ENCODE measurements at regions of chr2 and their contacts with region 1.

Region 1: DNA sequence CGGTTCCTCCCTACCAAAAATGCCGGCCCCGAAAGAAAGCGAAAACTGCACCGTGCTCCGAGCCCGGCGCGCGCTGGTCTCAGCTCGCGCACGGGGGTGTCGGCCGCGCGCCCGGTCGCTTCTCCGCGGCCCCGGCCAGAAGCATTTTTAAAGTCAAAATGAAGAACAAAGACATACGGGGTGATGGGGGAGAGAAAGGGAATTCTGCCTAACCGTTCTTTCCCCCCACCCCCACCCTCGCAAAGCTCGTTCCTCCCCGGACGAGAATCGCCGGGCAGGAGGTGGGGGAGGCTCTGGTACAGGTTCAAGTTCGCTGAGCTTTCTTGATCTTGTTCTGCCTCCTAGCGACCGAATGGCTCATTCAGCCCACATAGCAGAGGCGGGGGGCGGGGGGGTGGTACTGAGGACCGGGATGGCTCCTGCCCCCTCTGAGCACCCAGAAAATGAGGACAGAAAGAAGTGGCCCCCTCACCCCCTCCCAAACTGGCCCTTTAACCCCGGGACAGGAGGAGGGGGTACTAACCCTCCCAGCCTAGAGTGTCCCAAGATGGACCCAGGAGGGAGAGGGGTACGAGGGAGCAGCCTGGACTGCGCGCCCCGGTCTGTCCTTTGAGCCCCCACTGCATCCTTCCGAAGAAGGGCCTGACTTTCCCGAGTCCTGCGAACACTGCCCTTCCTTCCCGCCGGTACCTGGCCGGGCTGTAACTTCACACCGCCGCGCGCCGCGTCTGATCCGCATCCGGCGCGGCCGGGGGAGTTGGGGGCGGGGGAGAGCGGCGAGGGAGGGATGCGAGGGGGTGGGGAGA is 3.1 kb downstream of the BCL11A start:
- DNase-seq: peak; percentile 83 to 92 (median 87)
- ATAC-seq: peak; percentile 74
- H3K4me3 ChIP-seq: peak overlapping the region; percentile 52
- H3K4me1 ChIP-seq: peaks cover 21% of the 10 kb centered on the region
- CTCF ChIP-seq: peak; percentile 11

Region 2: GRCh38 chr2:59025157-59025757 is 1525.1 kb before region 1 on chr2:
- intact Hi-C with region 1: loop called in 1 of 2 experiments (anchors 10 kb)
- DNase-seq: peak in 2 of 3 donors; percentile 50 to 55
- ATAC-seq: peak; percentile 40
- H3K4me3 ChIP-seq: no peak overlapping the region
- H3K4me1 ChIP-seq: no peaks in the 10 kb centered on the region
- CTCF ChIP-seq: peak; percentile 14

Region 3: DNA sequence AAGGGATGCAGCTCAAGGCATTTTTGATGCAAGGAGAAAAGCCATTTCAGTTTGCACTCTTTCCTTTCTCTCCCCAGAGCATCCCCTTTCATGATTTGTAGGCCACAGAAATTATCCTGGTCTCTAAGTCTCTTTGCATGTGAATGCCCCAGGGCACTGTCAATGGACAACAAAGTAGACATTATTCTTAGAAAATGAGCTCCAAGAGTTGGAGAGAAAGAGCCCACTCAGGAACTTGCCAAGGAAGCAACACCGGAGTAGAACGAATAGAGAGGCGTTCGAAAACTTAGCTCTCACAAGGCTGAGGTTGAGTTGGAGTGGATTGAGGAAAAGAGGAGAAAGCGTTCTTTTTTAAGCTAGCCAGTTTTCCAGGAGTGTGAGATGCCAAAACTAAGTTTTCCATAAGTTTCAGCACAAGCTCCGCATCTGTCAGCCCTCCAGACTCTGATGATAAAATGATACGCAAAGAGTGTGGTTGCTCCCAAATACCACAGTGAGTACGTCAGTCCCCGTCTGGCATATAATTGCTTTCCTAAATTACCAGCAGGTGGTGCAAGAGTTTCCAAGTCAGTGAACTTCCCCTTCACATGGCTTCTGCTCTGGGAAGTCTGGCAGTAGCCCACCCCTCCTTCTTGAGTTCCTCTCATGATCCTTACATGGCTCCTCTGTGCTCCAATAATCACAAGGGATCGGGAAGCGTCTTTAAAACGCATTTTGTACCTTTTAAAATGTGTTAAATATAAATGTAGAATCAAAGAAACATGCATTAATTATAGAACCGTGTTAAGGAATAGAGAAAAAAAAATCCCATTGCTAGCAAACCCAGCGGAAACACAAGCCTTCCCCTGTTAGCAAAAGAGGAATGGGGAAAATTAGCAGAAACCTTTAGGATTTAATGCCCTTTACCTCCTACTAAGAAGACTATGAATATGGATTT is 1248.6 kb before region 1 on chr2:
- intact Hi-C with region 1: loop called in 1 of 2 experiments (anchors 10 kb)
- DNase-seq: peak in 1 of 3 donors; percentile 55
- ATAC-seq: peak; percentile 69
- H3K4me3 ChIP-seq: no peak overlapping the region
- H3K4me1 ChIP-seq: no peaks in the 10 kb centered on the region
- CTCF ChIP-seq: peak; percentile 21

Region 4: DNA sequence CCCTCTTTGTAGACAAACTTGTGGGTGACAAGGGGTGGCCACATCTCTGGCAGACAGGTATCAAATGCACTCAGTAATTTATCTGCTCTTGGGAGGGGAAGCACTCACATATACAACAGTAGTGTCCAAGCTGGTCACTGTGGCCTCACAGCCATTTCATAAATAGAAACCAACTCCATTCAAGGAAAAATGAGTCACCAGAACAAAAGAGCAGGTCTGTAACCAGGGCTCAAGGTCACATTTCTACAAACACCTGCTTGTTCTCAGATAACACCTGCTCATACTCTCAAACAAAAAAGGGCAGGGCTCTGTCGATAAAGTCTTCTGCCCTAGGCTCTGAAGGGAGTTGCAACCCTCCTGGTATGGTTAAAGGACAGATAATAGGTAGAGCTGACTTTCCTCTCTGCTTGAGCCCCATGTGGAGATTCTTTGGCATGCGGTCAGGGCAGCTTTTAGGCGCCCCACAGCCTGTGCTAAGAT is 455.9 kb before region 1 on chr2:
- intact Hi-C with region 1: loop called in 1 of 2 experiments (anchors 5 kb)
- DNase-seq: peak in 1 of 3 donors; percentile 51
- ATAC-seq: peak; percentile 86
- H3K4me3 ChIP-seq: no peak overlapping the region
- H3K4me1 ChIP-seq: peaks cover 16% of the 10 kb centered on the region
- CTCF ChIP-seq: no peak

Region 5: DNA sequence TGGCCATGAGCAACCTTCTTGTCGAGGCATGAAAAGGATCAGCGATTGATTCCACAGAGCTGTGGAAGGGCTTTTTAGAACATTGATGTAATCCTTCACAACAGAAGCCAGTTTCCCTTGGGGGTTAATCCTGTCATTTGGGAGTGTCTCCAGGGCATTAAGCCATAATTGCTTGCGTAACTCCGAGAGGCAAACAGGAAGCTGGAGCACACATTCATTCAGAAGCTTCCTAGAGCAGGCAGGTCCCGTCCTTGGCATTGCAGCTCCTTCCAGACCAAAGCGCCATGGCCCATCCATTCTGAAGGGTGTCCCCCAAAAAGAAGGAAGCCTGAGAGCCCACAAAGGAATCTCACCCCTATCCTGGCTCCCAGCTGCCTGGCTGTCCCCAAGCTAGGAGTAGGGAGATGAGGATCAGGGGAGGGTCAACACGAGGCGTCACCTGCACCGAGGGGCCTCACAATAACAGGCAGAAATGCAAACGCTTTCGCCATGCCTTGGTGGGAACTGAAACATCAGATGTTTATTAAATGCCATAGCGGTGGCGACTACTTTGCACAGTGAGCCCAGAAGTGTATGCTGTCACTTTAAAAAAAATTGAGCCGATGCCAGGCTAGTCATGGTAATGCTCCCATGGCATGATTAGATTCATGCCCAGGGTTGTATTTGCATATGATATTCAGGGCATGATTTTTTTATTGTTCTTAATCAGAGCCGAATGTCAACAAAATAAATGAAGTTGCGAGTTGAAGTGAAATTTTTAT is 336.3 kb before region 1 on chr2:
- intact Hi-C with region 1: loop called in 1 of 2 experiments (anchors 10 kb)
- DNase-seq: peak; percentile 47 to 86 (median 69)
- ATAC-seq: peak; percentile 93
- H3K4me3 ChIP-seq: no peak overlapping the region
- H3K4me1 ChIP-seq: peaks cover 22% of the 10 kb centered on the region
- CTCF ChIP-seq: no peak

Measured in mucosa of descending colon (tissue), 3 donors.